ENCODE measurements at regions of chr2 and their contacts with region 1.

Region 1: GRCh38 chr2:200713003-200713703 is 98.6 kb upstream of the BZW1 start:
- DNase-seq: peak; percentile 98
- ATAC-seq: peak; percentile 96
- H3K4me3 ChIP-seq: peak overlapping the region; percentile 33; the same call in 1 of the 2 replicates
- H3K27ac ChIP-seq: peak overlapping the region; percentile 91
- H3K4me1 ChIP-seq: peaks cover 9% of the 10 kb centered on the region
- H3K27me3 ChIP-seq: no peaks in the 10 kb centered on the region
- CTCF ChIP-seq: peak; percentile 95

Region 2: GRCh38 chr2:199979832-199980628 is 733.1 kb before region 1 on chr2:
- CTCF ChIA-PET with region 1: no interaction called
- POLR2A ChIA-PET with region 1: interaction called, 29 read pairs
- intact Hi-C with region 1: no loop called
- DNase-seq: peak; percentile 89
- ATAC-seq: peak; percentile 52
- H3K4me3 ChIP-seq: no peak overlapping the region
- H3K27ac ChIP-seq: no peak overlapping the region
- H3K4me1 ChIP-seq: peaks cover 26% of the 10 kb centered on the region
- H3K27me3 ChIP-seq: no peaks in the 10 kb centered on the region
- CTCF ChIP-seq: peak; percentile 96

Region 3: DNA sequence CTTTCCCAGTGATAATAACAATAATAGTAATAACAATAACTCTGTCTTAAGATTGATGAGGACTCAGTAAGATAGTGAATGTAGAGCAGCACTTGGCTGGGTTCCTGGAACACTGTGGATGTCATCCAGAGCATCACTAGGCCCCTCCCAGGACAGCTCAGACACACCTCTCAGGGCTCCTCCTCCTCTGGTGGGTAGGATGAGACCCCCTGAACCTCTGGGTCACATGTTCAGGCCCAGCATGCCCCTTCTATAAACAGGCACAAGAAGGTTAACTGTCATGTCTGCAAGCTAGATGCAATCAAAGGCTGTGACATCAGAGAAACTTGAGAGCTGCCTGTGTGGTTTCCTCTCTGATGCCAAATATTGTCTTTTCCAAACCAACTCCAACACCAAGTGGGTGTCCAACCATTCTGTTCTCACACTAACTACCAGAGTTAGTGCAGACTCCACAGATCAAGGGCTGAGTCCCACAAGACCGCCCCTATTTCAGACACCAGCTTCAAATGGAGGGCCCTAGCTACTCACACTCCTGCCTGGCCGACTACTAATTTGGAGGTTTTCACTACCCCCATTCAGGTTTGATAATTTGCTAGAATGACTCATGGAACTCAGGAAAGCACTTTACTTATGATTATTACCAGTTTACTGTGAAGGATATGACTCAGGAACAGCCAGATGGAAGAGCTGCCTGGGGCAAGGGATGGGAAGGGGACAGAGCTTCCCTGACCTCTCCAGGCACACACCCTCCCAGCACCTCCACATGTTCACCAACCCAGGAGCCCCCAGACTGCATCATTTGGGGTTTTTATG is 52.2 kb after region 1 on chr2:
- CTCF ChIA-PET with region 1: no interaction called
- POLR2A ChIA-PET with region 1: no interaction called
- intact Hi-C with region 1: loop called (anchors 1 kb)
- DNase-seq: peak; percentile 95
- ATAC-seq: peak; percentile 83
- H3K4me3 ChIP-seq: peak overlapping the region; percentile 13; the same call in 1 of the 2 replicates
- H3K27ac ChIP-seq: peak overlapping the region; percentile 98
- H3K4me1 ChIP-seq: peaks cover 64% of the 10 kb centered on the region
- H3K27me3 ChIP-seq: no peaks in the 10 kb centered on the region
- CTCF ChIP-seq: no peak

Region 4: DNA sequence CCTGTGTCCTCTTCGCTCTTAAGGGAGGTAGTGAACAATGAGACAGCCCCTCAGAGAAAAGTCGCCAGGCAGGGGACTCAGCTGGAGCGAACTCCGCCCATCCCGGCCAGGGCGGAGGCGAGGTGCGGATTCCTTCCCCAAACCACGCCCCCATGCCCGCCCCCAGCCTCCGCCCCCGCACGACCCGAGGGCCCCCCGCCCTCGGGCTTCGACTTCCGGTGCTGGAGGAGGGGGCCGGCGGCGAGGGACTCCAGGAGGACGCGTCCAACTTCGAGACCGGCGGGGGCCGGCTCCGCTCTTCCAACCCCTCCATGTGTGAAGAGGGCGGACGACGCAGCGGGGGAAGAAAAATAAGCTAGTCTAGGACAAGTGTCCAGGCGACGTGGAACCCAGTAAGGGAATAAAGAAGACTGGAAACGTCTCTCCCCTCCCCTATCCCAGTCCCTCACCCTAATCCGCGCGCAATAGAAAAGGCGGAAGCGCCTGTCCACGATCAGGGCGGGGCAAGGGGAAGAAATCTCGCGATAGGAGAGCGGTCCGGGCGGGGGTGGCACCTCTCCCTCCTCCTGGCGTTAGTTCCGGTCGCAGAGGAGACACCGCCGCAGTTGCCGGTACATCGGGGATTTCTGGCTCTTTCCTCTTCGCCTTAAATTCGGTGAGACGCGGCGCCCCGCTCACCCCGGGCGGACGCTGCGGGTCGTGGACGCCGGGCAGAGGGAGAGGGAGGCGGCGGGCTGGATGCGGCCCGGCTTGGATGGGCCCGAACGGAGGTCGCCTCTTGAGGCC is 98.4 kb after region 1 on chr2 and contains the start of gene BZW1:
- CTCF ChIA-PET with region 1: interaction called, 3 read pairs
- POLR2A ChIA-PET with region 1: interaction called, 3 read pairs
- intact Hi-C with region 1: loop called (anchors 1 kb)
- DNase-seq: peak; percentile 97
- ATAC-seq: peak; percentile 76
- H3K4me3 ChIP-seq: peak within 1 kb of the TSS; percentile 84
- H3K27ac ChIP-seq: peak within 1 kb of the TSS; percentile 97
- H3K4me1 ChIP-seq: peaks cover 41% of the 10 kb centered on the region
- H3K27me3 ChIP-seq: no peaks in the 10 kb centered on the region
- CTCF ChIP-seq: no peak
- total RNA-seq, gene BZW1: 389 and 626 TPM in 2 replicates

Region 5: GRCh38 chr2:200864176-200864976 is 151.2 kb after region 1 on chr2 and contains the start of gene CLK1:
- CTCF ChIA-PET with region 1: no interaction called
- POLR2A ChIA-PET with region 1: interaction called, 3 read pairs
- intact Hi-C with region 1: loop called (anchors 1 kb)
- DNase-seq: peak; percentile 96
- ATAC-seq: peak; percentile 84
- H3K4me3 ChIP-seq: peak within 1 kb of the TSS; percentile 93
- H3K27ac ChIP-seq: peak within 1 kb of the TSS; percentile 76
- H3K4me1 ChIP-seq: peaks cover 26% of the 10 kb centered on the region
- H3K27me3 ChIP-seq: no peaks in the 10 kb centered on the region
- CTCF ChIP-seq: no peak
- total RNA-seq, gene CLK1: 46.9 and 51.1 TPM in 2 replicates

Region 6: DNA sequence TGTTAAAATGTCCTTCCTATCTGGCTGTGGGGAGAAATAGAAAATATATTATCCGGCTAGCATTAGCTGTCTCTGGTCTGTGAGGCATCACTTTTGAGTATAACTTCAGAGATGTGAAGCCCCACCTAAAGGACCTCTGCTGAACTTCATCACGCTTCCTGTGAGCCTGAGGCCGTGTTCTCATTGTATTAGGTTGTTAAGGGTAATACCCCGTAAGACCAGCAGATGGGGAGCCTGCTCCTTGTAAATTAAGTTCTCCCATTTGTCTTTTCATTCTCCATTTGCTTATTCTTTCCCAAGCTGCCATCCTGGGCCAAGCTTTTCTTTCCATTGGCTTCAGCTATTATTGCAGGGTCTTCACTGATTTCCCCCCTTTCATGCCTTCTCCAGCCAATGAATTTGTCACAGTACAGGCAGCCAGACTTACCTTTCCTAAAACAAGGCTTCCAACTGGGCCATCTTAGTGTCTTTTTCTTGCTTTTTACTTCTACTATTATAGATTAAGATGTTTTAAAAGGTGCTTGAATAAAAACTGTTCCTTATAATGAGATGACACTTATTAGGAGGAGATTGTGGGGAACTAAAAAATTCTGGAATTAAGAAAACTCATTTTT is 188.4 kb after region 1 on chr2:
- CTCF ChIA-PET with region 1: no interaction called
- POLR2A ChIA-PET with region 1: no interaction called
- intact Hi-C with region 1: loop called (anchors 1 kb)
- DNase-seq: peak; percentile 94
- ATAC-seq: peak; percentile 92
- H3K4me3 ChIP-seq: no peak overlapping the region
- H3K27ac ChIP-seq: no peak overlapping the region
- H3K4me1 ChIP-seq: no peaks in the 10 kb centered on the region
- H3K27me3 ChIP-seq: no peaks in the 10 kb centered on the region
- CTCF ChIP-seq: peak; percentile 86

Measured in PC-3 (cell line).